ENCODE measurements at regions of chr11 and their contacts with region 1.

Region 1: GRCh38 chr11:9972989-9973388 is 309.1 kb downstream of the SWAP70 start:
- ATAC-seq: peak in 3 of 8 experiments; percentile 83 to 97 (median 95)
- H3K4me3 ChIP-seq: no peak overlapping the region
- H3K27ac ChIP-seq: no peak overlapping the region
- H3K4me1 ChIP-seq: no peaks in the 10 kb centered on the region

Region 2: GRCh38 chr11:9757809-9758636 is 215.0 kb before region 1 on chr11:
- in situ Hi-C with region 1: loop called in 2 of 9 experiments (anchors 25 kb)
- ATAC-seq: peak; percentile 10 to 93 (median 84)
- H3K4me3 ChIP-seq: peak overlapping the region; percentile 34 to 47 (median 45)
- H3K27ac ChIP-seq: no peak overlapping the region
- H3K4me1 ChIP-seq: peaks cover 11% of the 10 kb centered on the region in 2 donors

Region 3: GRCh38 chr11:9787981-9788521 is 184.9 kb before region 1 on chr11:
- in situ Hi-C with region 1: loop called in 1 of 9 experiments (anchors 25 kb)
- ATAC-seq: peak in 2 of 8 experiments; percentile 33 to 46
- H3K4me3 ChIP-seq: no peak overlapping the region
- H3K27ac ChIP-seq: no peak overlapping the region
- H3K4me1 ChIP-seq: no peaks in the 10 kb centered on the region

Region 4: GRCh38 chr11:10122326-10123197 is 149.6 kb after region 1 on chr11:
- in situ Hi-C with region 1: no loop called
- ATAC-seq: peak in 2 of 8 experiments; percentile 26 to 65
- H3K4me3 ChIP-seq: no peak overlapping the region
- H3K27ac ChIP-seq: no peak overlapping the region
- H3K4me1 ChIP-seq: no peaks in the 10 kb centered on the region